Activated CD8-positive, alpha-beta memory T cell treated with anti-CD3 and anti-CD28 coated beads, Interleukin-2, amount 10 ng/mL, durations not matched to agents 7 days and 5 days (primary cell): ENCODE measurements at regions of chr2 and their contacts with region 1.

Region 1: GRCh38 chr2:204072443-204073324 is 136.1 kb downstream of the ICOS start:
- DNase-seq: peak; percentile 73
- ATAC-seq: peak; percentile 71
- H3K4me3 Mint-ChIP-seq: no peak overlapping the region
- H3K27ac Mint-ChIP-seq: no peak overlapping the region
- H3K4me1 Mint-ChIP-seq: no peaks in the 10 kb centered on the region
- H3K27me3 Mint-ChIP-seq: peaks cover 19% of the 10 kb centered on the region

Region 2: GRCh38 chr2:203878063-203878462 is 194.6 kb before region 1 on chr2:
- CTCF ChIA-PET with region 1: no interaction called
- DNase-seq: no peak
- ATAC-seq: no peak
- H3K4me3 Mint-ChIP-seq: no peak overlapping the region
- H3K27ac Mint-ChIP-seq: no peak overlapping the region
- H3K4me1 Mint-ChIP-seq: peaks cover 41% of the 10 kb centered on the region
- H3K27me3 Mint-ChIP-seq: no peaks in the 10 kb centered on the region

Region 3: DNA sequence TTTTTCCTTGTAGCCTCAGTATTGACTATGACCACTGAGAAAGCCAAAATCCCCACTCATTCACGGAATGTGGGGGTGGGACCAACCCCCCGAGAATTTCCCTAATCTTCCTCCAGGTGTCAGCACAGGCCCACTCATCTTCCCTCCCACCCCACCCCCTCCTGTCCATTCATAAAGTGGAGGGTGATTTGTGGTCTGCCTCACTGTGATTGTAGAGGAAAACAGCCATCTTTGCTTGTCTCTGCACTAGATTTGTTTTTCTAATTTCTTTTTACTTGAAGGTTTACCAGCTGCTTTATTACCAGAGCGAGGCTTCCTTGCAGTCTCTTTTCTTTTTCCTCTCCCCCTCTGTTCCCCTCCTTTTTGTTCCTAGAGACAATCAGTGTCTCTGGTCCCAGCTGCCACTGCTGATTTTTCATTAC is 35.7 kb after region 1 on chr2:
- CTCF ChIA-PET with region 1: interaction called, 23 read pairs
- DNase-seq: peak; percentile 77
- ATAC-seq: peak; percentile 63
- H3K4me3 Mint-ChIP-seq: peak overlapping the region; percentile 70
- H3K27ac Mint-ChIP-seq: peak overlapping the region; percentile 90
- H3K4me1 Mint-ChIP-seq: peaks cover 70% of the 10 kb centered on the region
- H3K27me3 Mint-ChIP-seq: peaks cover 16% of the 10 kb centered on the region

Region 4: GRCh38 chr2:204170411-204170810 is 97.7 kb after region 1 on chr2:
- CTCF ChIA-PET with region 1: no interaction called
- DNase-seq: no peak
- ATAC-seq: no peak
- H3K4me3 Mint-ChIP-seq: no peak overlapping the region
- H3K27ac Mint-ChIP-seq: no peak overlapping the region
- H3K4me1 Mint-ChIP-seq: no peaks in the 10 kb centered on the region
- H3K27me3 Mint-ChIP-seq: peaks cover 17% of the 10 kb centered on the region